A673 (cell line): ENCODE measurements at regions of chr7 and their contacts with region 1.

Region 1: GRCh38 chr7:105055084-105055483 is 41.1 kb downstream of the KMT2E start:
- DNase-seq: no peak
- H3K4me3 ChIP-seq: no peak overlapping the region
- H3K27ac ChIP-seq: no peak overlapping the region
- H3K4me1 ChIP-seq: no peaks in the 10 kb centered on the region
- H3K27me3 ChIP-seq: no peaks in the 10 kb centered on the region
- CTCF ChIP-seq: no peak

Region 2: DNA sequence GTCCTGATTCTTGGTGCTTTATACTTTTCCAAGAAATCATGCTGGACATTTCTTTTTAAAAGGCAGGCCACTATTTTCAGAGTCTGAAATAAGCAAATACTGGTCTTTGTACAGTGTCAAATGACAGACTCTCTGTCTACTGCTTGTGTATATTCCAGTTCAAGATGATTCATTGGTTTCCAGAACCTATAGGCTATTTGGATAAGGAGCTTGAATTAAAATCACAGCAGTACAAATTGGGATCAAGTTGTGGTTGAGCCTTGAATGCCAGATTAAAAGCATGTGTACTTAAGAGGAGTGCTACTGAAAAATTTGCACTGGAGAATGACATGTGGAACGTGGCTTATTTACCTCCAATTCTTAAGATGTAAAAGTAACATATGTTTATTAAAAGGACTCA is 30.3 kb before region 1 on chr7:
- CTCF ChIA-PET with region 1: no interaction called
- POLR2A ChIA-PET with region 1: interaction called, 15 read pairs
- intact Hi-C with region 1: no loop called
- DNase-seq: no peak
- H3K4me3 ChIP-seq: no peak overlapping the region
- H3K27ac ChIP-seq: no peak overlapping the region
- H3K4me1 ChIP-seq: peaks cover 66% of the 10 kb centered on the region
- H3K27me3 ChIP-seq: no peaks in the 10 kb centered on the region
- CTCF ChIP-seq: no peak